K562 (cell line): ENCODE measurements at regions of chr15 and their contacts with region 1.

Region 1: DNA sequence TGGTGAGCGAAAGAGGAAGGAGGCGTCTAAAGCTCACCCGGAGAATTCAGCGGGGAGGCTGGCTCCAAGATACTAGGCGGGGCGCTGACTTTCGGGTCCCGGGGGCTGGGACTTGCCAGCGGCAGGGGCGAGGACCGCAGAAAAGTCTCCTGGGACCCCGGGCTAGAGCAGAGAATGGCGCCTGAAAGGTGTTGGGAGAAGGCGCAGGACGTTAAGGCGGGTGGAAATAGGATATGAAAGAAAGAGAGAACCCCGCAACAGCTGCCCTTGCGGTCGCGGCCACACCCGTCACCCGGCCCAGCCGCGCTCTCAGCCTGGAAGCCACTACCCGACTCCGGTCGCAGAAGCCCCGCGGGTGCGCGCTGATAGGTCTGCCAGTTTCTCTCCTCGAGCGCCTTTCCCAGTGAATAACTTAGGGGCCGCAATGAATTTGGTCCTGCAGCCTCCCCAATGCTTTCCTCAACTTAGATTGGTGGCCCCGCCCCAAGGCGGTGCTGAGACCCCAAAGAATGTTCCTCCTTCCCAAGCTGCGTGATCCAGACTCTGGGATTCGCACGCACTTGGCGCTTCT is 602 bp downstream of the LTK start:
- DNase-seq: peak; percentile 63 to 71 (median 70)
- ATAC-seq: peak; percentile 81
- H3K4me3 ChIP-seq: peak overlapping the region; percentile 47
- H3K27ac ChIP-seq: peak overlapping the region; percentile 66
- H3K4me1 ChIP-seq: peaks cover 9 to 30% of the 10 kb centered on the region in 2 experiments; a peak in 4 of 5 replicates
- H3K27me3 ChIP-seq: no peaks in the 10 kb centered on the region
- CTCF ChIP-seq: no peak
- EP300 ChIP-seq: no peak
- POLR2A ChIP-seq: no peak
- RAD21 ChIP-seq: no peak

Region 2: GRCh38 chr15:41493205-41493901 is 19.7 kb before region 1 on chr15 and contains the start of gene ITPKA:
- CTCF ChIA-PET with region 1: no interaction called
- POLR2A ChIA-PET with region 1: interaction called, 8 read pairs
- in situ Hi-C with region 1: no loop called
- intact Hi-C with region 1: loop called (anchors 2 kb)
- DNase-seq: peak; percentile 88 to 91 (median 90)
- ATAC-seq: peak; percentile 72
- H3K4me3 ChIP-seq: peak within 1 kb of the TSS; percentile 60
- H3K27ac ChIP-seq: peak within 1 kb of the TSS; percentile 80
- H3K4me1 ChIP-seq: peaks cover 24 to 42% of the 10 kb centered on the region in 2 experiments
- H3K27me3 ChIP-seq: no peaks in the 10 kb centered on the region
- CTCF ChIP-seq: no peak
- EP300 ChIP-seq: no peak
- POLR2A ChIP-seq: peak; percentile 80
- RAD21 ChIP-seq: no peak
- polyA plus RNA-seq, gene ITPKA: 0.14 to 0.55 TPM